ENCODE measurements at regions of chr4 and their contacts with region 1.

Region 1: DNA sequence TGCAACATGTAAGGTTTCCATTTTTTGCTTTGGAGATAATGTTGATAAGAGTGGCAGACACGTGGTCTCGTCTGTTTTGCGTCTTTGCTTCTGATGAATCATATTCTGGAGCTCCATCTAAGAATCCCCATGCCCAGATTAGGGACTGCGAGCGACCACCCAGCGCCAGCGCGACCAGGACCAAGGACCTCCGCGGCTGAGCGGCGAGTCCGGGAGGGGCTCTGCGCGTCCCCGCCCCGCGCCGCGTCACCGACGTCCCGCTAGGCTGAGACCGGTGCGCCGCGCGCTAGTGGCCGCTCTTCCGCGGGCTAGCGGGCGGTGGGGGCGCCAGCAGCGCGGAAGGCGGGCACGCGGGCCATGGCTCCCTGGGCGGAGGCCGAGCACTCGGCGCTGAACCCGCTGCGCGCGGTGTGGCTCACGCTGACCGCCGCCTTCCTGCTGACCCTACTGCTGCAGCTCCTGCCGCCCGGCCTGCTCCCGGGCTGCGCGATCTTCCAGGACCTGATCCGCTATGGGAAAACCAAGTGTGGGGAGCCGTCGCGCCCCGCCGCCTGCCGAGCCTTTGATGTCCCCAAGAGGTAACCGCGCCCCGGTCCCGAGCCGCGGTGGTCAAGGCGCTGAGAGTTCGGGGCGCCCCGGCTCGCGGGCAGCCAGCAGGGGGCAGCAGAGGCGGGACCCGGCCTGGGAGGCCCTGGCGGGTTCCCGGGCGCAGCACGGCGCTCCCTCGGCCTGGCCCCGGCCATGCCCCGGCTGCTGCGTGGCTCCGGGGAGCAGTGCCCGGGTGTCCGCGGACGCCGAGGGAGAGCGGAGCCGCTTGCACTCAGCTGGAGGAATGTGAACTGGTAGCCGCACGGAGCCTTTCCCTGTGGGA is at the start of gene SRD5A3:
- DNase-seq: peak; percentile 90
- ATAC-seq: peak; percentile 84
- H3K4me3 ChIP-seq: peak within 1 kb of the TSS; percentile 86
- H3K27ac ChIP-seq: peak within 1 kb of the TSS; percentile 81
- H3K4me1 ChIP-seq: peaks cover 49% of the 10 kb centered on the region
- H3K27me3 ChIP-seq: no peaks in the 10 kb centered on the region
- CTCF ChIP-seq: peak; percentile 96
- total RNA-seq, gene SRD5A3: 15.2 and 24.0 TPM in 2 replicates

Region 2: GRCh38 chr4:54999003-54999402 is 347.2 kb before region 1 on chr4:
- CTCF ChIA-PET with region 1: interaction called, 12 read pairs
- POLR2A ChIA-PET with region 1: no interaction called
- intact Hi-C with region 1: no loop called
- DNase-seq: peak; percentile 55
- ATAC-seq: peak; percentile 60
- H3K4me3 ChIP-seq: no peak overlapping the region
- H3K27ac ChIP-seq: no peak overlapping the region
- H3K4me1 ChIP-seq: peaks cover 7% of the 10 kb centered on the region; the same call in 1 of the 2 replicates
- H3K27me3 ChIP-seq: no peaks in the 10 kb centered on the region
- CTCF ChIP-seq: peak; percentile 75

Region 3: GRCh38 chr4:55214172-55214571 is 132.0 kb before region 1 on chr4:
- CTCF ChIA-PET with region 1: no interaction called
- POLR2A ChIA-PET with region 1: no interaction called
- intact Hi-C with region 1: no loop called
- DNase-seq: peak; percentile 50
- ATAC-seq: no peak
- H3K4me3 ChIP-seq: no peak overlapping the region
- H3K27ac ChIP-seq: no peak overlapping the region
- H3K4me1 ChIP-seq: 0 out of 2 replicates have a peak, but pooled peaks cover 5% of the 10 kb centered on the region
- H3K27me3 ChIP-seq: no peaks in the 10 kb centered on the region
- CTCF ChIP-seq: no peak

Region 4: DNA sequence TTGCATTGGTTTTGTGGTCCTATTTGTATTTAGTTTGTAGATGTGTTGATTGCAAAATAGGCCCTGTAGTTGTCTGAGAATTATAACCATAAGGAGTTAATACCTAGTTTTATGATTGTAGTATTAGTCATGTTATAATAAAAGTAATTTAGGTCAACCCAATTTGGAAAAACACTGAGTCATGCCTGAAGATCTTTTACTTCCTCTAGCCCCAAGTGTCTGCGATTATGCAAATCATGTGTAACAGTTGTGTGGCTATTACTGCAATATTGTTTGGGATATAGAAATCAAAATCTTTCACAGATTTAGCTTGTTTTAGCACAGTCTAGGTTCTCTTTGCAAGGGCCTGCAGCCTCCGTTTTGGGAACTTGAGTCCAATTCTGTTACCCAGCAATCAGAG is 12.5 kb after region 1 on chr4:
- CTCF ChIA-PET with region 1: no interaction called
- POLR2A ChIA-PET with region 1: no interaction called
- intact Hi-C with region 1: loop called (anchors 1 kb)
- DNase-seq: peak; percentile 83
- ATAC-seq: peak; percentile 72
- H3K4me3 ChIP-seq: peak overlapping the region; percentile 15; the same call in 1 of the 2 replicates
- H3K27ac ChIP-seq: peak overlapping the region; percentile 77
- H3K4me1 ChIP-seq: peaks cover 51% of the 10 kb centered on the region
- H3K27me3 ChIP-seq: no peaks in the 10 kb centered on the region
- CTCF ChIP-seq: no peak

Region 5: GRCh38 chr4:55395529-55396307 is 49.5 kb after region 1 on chr4 and contains the start of gene TMEM165:
- CTCF ChIA-PET with region 1: interaction called, 8 read pairs
- POLR2A ChIA-PET with region 1: interaction called, 4 read pairs
- intact Hi-C with region 1: loop called (anchors 1 kb)
- DNase-seq: peak; percentile 94
- ATAC-seq: peak; percentile 86
- H3K4me3 ChIP-seq: peak within 1 kb of the TSS; percentile 72
- H3K27ac ChIP-seq: peak within 1 kb of the TSS; percentile 78
- H3K4me1 ChIP-seq: peaks cover 41% of the 10 kb centered on the region
- H3K27me3 ChIP-seq: no peaks in the 10 kb centered on the region
- CTCF ChIP-seq: no peak
- total RNA-seq, gene TMEM165: 146 and 148 TPM in 2 replicates

Region 6: GRCh38 chr4:55444827-55445226 is 98.6 kb after region 1 on chr4:
- CTCF ChIA-PET with region 1: interaction called, 3 read pairs
- POLR2A ChIA-PET with region 1: no interaction called
- intact Hi-C with region 1: loop called (anchors 5 kb)
- DNase-seq: peak; percentile 67
- ATAC-seq: peak; percentile 23; the same call in 1 of the 2 replicates
- H3K4me3 ChIP-seq: no peak overlapping the region
- H3K27ac ChIP-seq: no peak overlapping the region
- H3K4me1 ChIP-seq: peaks cover 23% of the 10 kb centered on the region
- H3K27me3 ChIP-seq: no peaks in the 10 kb centered on the region
- CTCF ChIP-seq: peak; percentile 77

Region 7: GRCh38 chr4:55546756-55547465 is 200.7 kb after region 1 on chr4 and contains the start of gene CLOCK:
- CTCF ChIA-PET with region 1: interaction called, 9 read pairs
- POLR2A ChIA-PET with region 1: interaction called, 13 read pairs
- intact Hi-C with region 1: loop called (anchors 1 kb)
- DNase-seq: peak; percentile 87
- ATAC-seq: peak; percentile 49
- H3K4me3 ChIP-seq: peak within 1 kb of the TSS; percentile 86
- H3K27ac ChIP-seq: peak within 1 kb of the TSS; percentile 85
- H3K4me1 ChIP-seq: peaks cover 60% of the 10 kb centered on the region
- H3K27me3 ChIP-seq: no peaks in the 10 kb centered on the region
- CTCF ChIP-seq: peak; percentile 59
- total RNA-seq, gene CLOCK: 36.3 and 39.7 TPM in 2 replicates

Region 8: GRCh38 chr4:55866973-55867574 is 520.9 kb after region 1 on chr4:
- CTCF ChIA-PET with region 1: no interaction called
- POLR2A ChIA-PET with region 1: no interaction called
- intact Hi-C with region 1: loop called (anchors 5 kb)
- DNase-seq: peak; percentile 79
- ATAC-seq: peak; percentile 79
- H3K4me3 ChIP-seq: no peak overlapping the region
- H3K27ac ChIP-seq: peak overlapping the region; percentile 41
- H3K4me1 ChIP-seq: peaks cover 28% of the 10 kb centered on the region
- H3K27me3 ChIP-seq: no peaks in the 10 kb centered on the region
- CTCF ChIP-seq: peak; percentile 95